ENCODE measurements at regions of chr9 and their contacts with region 1.

Region 1: DNA sequence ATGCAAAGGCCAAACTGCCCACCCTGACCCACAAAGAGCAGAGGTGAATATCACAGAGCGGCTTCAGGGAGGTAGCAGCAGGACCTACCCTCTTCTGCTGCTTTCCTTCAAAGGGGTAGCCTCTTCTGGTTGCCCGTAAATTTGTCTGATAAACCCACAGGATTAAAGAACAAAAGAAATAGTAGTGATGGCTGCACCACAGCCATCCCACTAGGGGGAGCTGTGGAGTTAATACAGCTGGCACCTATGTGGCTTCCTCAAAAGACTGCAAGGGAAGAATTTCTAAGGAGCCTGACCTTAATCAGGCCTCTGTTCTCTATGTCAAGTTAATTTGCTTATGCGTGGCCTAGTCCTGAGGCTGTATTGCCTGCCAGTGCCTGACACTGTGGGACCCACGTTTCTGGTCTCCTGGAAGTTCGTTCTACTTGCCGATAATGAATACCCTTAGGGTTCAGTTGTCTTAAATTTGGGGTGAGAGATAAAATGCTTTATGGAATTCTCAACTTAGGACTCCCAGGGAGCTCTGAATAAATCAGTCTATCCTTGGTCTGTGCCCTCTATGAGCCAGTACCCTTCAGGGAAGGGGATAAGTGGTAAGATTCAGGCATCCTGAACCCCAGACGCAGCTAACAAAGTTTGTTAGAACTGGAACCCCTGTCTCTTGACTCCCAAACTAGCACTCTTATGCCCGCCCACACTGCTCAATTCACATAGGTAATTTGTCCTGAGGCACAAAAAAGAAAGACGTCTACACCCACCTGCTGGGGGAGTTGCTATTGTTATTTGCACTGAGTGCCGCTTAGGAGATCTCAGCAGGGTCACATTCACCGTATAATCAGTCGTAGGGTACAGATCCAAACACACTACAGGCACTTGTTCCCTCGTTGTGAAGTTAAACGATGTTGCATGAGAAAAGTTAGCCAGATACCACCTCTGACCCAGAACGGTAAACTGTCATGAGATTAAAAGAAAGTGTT is 77.1 kb downstream of the SUSD1 start:
- DNase-seq: peak; percentile 77
- ATAC-seq: peak; percentile 85
- H3K4me3 Mint-ChIP-seq: peak overlapping the region; percentile 38
- H3K27ac Mint-ChIP-seq: peak overlapping the region; percentile 79
- H3K4me1 Mint-ChIP-seq: peaks cover 19% of the 10 kb centered on the region
- H3K27me3 Mint-ChIP-seq: peaks cover 5% of the 10 kb centered on the region
- CTCF ChIP-seq: peak; percentile 84; the same call in 1 of the 2 replicates

Region 2: DNA sequence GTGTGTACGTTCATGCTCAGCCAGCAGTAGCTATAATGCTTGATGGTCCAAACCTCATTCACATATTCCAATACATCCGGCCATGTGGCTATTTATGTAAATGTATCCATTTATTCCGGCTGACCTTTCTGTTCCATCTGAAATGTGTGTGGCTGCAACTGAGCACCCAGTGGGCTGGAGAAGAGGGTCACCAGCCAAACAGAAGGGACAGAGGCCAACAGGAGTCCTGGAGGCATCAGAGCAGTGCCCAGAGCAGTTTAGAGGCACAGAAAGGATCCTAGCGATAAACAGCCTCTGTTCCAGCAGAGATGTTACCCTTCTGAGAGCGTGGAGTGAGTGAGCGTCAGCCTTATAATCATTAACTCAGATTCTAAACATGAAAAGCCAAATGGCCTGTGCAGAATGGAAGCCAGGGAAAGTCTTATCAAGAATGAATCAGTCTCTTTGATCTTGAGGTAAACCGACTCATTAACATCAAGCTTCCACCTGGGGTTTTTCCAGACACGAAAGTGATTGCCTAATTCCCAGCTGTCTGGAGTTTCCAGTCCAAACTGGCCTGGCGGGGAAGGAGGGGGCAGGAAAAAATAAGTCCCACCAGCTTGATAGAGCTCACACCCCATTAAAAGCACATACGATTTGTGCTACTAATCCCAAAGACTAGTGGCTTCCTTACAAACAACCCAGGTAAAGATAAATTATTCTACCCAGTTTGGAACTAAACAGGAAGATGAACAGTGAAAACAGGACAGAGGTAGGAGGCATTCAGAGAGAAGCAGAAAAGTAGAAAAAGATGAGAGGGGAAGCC is 21.4 kb after region 1 on chr9:
- CTCF ChIA-PET with region 1: interaction called, 15 read pairs
- POLR2A ChIA-PET with region 1: no interaction called
- DNase-seq: no peak
- ATAC-seq: no peak
- H3K4me3 Mint-ChIP-seq: no peak overlapping the region
- H3K27ac Mint-ChIP-seq: peak overlapping the region; percentile 31
- H3K4me1 Mint-ChIP-seq: peaks cover 22% of the 10 kb centered on the region
- H3K27me3 Mint-ChIP-seq: no peaks in the 10 kb centered on the region
- CTCF ChIP-seq: no peak

Region 3: GRCh38 chr9:112186695-112187094 is 88.7 kb after region 1 on chr9:
- CTCF ChIA-PET with region 1: interaction called, 10 read pairs
- POLR2A ChIA-PET with region 1: no interaction called
- DNase-seq: no peak
- ATAC-seq: no peak
- H3K4me3 Mint-ChIP-seq: no peak overlapping the region
- H3K27ac Mint-ChIP-seq: no peak overlapping the region
- H3K4me1 Mint-ChIP-seq: peaks cover 9% of the 10 kb centered on the region
- H3K27me3 Mint-ChIP-seq: no peaks in the 10 kb centered on the region
- CTCF ChIP-seq: no peak

Region 4: DNA sequence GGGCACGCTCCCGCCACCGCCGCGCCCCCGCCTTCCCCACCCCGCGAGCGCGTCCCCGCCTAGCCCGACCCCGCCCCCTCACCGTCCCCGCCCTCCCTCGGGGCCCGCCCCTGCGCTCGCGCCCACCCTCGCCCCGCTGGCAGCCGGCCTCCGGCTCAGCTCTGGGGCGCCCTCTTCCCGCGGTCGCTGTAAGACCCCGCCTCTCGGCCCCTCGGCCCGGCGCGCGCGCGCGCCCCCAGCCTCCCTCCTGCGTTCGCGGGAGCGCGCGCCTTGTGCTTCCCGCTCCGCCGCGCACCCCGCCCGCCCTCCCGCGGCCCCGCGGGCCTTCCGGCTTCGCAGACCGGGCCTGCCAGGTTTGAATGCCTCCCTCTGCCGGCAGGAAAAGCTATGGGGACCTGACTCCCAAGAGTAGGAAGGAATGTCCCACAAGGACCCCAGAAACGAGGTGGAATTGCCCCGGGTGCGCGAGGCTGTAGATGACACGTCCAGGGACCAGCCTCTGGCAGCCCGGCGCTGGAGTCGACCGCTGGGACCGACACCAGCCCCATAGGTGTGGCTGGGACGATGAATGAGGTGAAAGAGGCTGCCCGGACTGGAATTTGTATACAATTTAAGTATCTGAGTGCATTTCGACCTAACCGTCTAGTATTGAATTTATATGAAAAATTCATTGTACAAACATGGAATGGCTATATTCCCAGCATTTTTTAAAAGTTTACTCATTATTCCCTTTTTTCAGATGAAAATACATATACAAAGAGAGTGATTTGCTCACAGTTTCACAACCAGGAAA is 235.8 kb after region 1 on chr9:
- CTCF ChIA-PET with region 1: interaction called, 11 read pairs
- POLR2A ChIA-PET with region 1: no interaction called
- DNase-seq: peak; percentile 95
- ATAC-seq: peak; percentile 92
- H3K4me3 Mint-ChIP-seq: peak overlapping the region; percentile 92
- H3K27ac Mint-ChIP-seq: peak overlapping the region; percentile 99
- H3K4me1 Mint-ChIP-seq: peaks cover 29% of the 10 kb centered on the region
- H3K27me3 Mint-ChIP-seq: no peaks in the 10 kb centered on the region
- CTCF ChIP-seq: peak; percentile 10; the same call in 1 of the 2 replicates

Region 5: GRCh38 chr9:112361601-112362000 is 263.6 kb after region 1 on chr9:
- CTCF ChIA-PET with region 1: interaction called, 15 read pairs
- POLR2A ChIA-PET with region 1: no interaction called
- DNase-seq: no peak
- ATAC-seq: no peak
- H3K4me3 Mint-ChIP-seq: no peak overlapping the region
- H3K27ac Mint-ChIP-seq: no peak overlapping the region
- H3K4me1 Mint-ChIP-seq: no peaks in the 10 kb centered on the region
- H3K27me3 Mint-ChIP-seq: no peaks in the 10 kb centered on the region
- CTCF ChIP-seq: peak; percentile 43

Region 6: DNA sequence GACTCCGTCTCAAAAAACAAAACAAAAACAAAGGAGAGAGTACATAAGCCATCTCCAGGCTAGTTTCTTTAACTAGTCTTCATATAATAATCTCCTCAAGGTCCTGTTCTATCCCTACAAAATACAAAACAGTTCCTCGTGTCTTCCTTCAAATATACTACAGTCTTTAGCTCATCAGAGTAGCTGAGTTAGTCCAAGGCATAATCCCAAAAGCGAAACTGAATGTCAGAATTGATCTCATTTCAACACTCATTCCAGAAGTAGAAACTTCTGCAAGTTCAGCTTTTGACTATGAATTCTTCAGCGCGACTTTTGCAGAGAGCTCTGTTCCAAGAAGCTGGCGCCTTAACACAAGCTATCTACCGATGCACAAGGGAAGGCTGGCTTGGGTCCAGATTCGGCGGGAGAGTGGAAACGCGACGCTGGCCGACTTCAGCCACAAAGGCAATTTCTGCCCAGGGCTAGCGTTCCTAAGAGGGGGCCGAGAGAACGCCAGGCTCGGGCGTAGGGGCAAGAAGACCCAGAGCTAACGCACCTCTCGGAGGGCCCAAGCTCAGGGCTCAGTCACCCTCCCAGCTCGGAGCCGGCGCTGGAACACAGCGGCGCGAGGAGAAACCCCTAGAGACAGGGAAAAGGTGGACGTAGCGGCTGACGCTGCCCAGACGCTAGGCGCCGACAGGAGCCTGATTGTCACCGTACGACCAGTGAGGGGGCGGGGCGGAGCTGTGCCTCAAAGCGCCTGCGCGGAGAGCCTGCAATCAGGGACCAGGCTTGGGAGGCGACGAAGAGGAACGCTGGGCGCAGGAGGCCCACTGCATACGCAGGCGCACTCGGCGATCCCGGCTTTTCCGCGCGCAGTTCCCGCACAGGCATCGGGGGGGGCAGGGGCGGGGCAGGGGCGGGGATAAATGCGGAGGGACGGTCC is 281.4 kb after region 1 on chr9:
- CTCF ChIA-PET with region 1: interaction called, 10 read pairs
- POLR2A ChIA-PET with region 1: interaction called, 3 read pairs
- DNase-seq: peak; percentile 100
- ATAC-seq: peak; percentile 97
- H3K4me3 Mint-ChIP-seq: peak overlapping the region; percentile 90
- H3K27ac Mint-ChIP-seq: peak overlapping the region; percentile 99
- H3K4me1 Mint-ChIP-seq: peaks cover 29% of the 10 kb centered on the region
- H3K27me3 Mint-ChIP-seq: no peaks in the 10 kb centered on the region
- CTCF ChIP-seq: no peak